Activated B cell treated with CpG ODN at 0.5 μM for 24 hours (primary cell): ENCODE measurements at regions of chr1 and their contacts with region 1.

Region 1: GRCh38 chr1:9867408-9868243 is 42.4 kb downstream of the CTNNBIP1 start:
- DNase-seq: peak; percentile 79
- ATAC-seq: peak; percentile 97
- H3K4me3 Mint-ChIP-seq: no peak overlapping the region
- H3K27ac Mint-ChIP-seq: no peak overlapping the region
- H3K4me1 Mint-ChIP-seq: no peaks in the 10 kb centered on the region
- H3K27me3 Mint-ChIP-seq: no peaks in the 10 kb centered on the region
- CTCF ChIP-seq: peak; percentile 24

Region 2: DNA sequence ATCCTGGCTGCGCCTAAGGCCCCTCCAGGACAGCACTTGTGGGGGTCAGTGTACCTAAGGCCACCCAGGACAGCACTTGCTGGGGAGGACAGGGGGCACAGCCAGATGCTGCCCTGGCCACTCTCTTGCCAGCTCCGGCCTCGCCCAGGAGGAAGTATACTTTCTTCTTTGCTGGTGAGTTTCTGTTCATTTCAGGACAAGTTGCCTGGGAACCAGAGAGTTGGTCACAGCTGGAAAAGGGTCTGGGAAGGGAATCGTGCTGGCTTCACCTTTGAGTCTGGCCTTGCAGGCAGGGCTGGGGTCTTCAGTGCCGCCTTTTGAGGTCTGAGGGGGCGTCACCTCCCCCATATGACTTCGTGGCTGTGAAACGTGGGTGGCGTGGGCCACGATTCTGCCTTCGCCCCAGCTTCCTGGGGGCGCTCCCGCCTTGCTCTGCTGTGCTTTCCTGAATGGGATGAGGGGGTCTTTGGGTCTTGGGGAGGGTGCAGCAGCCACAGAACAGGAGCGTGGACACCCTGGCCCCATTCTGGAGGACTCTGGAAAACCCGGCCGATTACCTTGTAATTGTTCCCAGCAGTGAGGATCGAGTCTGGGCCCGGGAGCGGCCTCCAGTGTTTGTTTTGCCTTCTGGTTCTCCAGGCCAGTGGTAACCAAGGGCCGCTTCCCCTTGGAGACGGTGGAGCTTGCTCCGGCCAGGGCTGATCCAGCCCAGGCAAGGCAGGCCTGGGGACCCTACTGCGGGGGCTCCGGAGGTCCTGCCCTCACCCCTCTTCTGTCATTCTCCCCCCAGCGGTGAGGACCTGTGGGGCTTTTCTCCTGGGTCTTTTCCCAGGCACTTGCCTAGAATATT is 529.0 kb before region 1 on chr1:
- CTCF ChIA-PET with region 1: no interaction called
- POLR2A ChIA-PET with region 1: no interaction called
- intact Hi-C with region 1: no loop called
- DNase-seq: no peak
- ATAC-seq: no peak
- H3K4me3 Mint-ChIP-seq: no peak overlapping the region
- H3K27ac Mint-ChIP-seq: no peak overlapping the region
- H3K4me1 Mint-ChIP-seq: no peaks in the 10 kb centered on the region
- H3K27me3 Mint-ChIP-seq: no peaks in the 10 kb centered on the region
- CTCF ChIP-seq: no peak

Region 3: GRCh38 chr1:9588551-9589143 is 279.0 kb before region 1 on chr1 and contains the start of gene TMEM201:
- CTCF ChIA-PET with region 1: no interaction called
- POLR2A ChIA-PET with region 1: no interaction called
- intact Hi-C with region 1: loop called (anchors 1 kb)
- DNase-seq: peak; percentile 98
- ATAC-seq: peak; percentile 91
- H3K4me3 Mint-ChIP-seq: peak within 1 kb of the TSS; percentile 84
- H3K27ac Mint-ChIP-seq: peak within 1 kb of the TSS; percentile 12
- H3K4me1 Mint-ChIP-seq: peaks cover 38% of the 10 kb centered on the region
- H3K27me3 Mint-ChIP-seq: no peaks in the 10 kb centered on the region
- CTCF ChIP-seq: no peak
- total RNA-seq, gene TMEM201: 8.1 and 9.4 TPM in 2 replicates

Region 4: DNA sequence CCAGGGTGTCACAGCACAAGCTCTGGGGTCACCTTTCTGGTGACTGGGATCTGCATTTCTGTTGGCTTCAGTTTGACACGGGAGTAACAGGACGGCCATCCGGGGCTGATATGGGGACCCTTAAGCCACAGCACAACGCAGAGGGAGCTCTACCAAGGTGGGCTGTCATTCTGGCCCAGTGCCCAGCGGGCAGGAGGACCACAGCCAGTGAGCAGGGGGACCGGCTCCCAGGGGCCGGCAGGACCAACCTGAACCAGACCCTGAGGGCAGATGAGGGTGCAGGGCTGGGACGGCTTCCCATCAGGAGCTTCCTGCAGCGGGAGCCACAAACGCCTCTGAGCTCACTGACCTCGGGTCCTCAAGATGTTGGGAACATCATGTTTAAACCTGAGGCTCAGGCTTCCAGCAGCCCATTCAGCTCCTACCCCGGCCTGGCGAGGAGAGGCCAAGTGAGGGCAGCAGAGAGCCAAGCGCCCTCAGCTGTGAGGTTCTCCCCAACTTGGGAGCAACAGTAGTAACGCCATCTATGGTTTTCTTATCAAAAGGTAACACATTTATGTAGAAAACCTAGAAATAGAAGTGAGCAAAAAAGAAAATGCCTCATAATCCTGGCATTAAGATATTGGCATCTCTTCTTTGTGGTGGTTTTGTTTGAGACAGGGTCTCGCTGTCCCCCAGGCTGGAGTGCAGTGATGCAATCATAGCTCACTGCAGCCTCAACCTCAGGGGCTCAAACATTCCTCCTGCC is 252.1 kb before region 1 on chr1:
- CTCF ChIA-PET with region 1: interaction called, 39 read pairs
- POLR2A ChIA-PET with region 1: no interaction called
- intact Hi-C with region 1: loop called (anchors 1 kb)
- DNase-seq: peak; percentile 47
- ATAC-seq: peak; percentile 96
- H3K4me3 Mint-ChIP-seq: no peak overlapping the region
- H3K27ac Mint-ChIP-seq: no peak overlapping the region
- H3K4me1 Mint-ChIP-seq: peaks cover 4% of the 10 kb centered on the region
- H3K27me3 Mint-ChIP-seq: no peaks in the 10 kb centered on the region
- CTCF ChIP-seq: peak; percentile 43

Region 5: DNA sequence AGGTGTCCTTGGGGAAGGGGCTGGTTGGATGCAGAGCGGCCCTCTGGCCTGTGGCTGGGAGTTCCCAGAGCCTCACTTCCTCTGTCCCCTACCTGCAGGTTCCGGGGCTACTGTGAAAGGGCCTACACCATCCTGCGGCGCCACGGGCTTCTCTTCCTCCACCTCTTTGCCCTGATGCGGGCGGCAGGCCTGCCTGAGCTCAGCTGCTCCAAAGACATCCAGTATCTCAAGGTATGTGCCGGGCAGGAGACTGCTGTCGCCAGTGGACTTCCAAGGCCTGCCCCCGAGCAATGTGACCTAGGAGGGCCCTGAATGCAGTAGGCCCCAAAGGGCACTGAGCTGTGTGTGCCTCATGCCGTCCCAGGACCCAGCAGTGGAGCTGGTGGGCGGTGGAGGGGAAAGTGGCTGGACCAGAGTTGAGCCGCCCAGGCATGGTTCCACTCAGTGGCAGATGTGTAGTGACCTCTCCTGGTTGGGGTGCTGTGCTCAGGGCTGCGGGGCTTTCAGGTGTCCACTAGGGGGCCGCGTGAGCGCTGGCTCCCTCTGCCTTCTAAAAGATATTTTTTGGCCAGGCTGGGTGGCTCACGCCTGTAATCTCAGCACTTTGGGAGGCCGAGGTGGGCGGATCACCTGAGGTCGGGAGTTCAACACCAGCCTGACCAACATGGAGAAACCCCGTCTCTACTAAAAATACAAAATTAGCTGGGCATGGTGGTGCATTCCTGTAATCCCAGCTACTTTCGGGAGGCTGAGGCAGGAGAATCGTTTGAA is 142.7 kb before region 1 on chr1:
- CTCF ChIA-PET with region 1: interaction called, 4 read pairs
- POLR2A ChIA-PET with region 1: no interaction called
- intact Hi-C with region 1: loop called (anchors 1 kb)
- DNase-seq: peak; percentile 62
- ATAC-seq: peak; percentile 70
- H3K4me3 Mint-ChIP-seq: no peak overlapping the region
- H3K27ac Mint-ChIP-seq: peak overlapping the region; percentile 74
- H3K4me1 Mint-ChIP-seq: peaks cover 21% of the 10 kb centered on the region
- H3K27me3 Mint-ChIP-seq: no peaks in the 10 kb centered on the region
- CTCF ChIP-seq: peak; percentile 62

Region 6: GRCh38 chr1:9823943-9824701 is 43.5 kb before region 1 on chr1 and contains the start of gene CLSTN1:
- CTCF ChIA-PET with region 1: interaction called, 3 read pairs
- POLR2A ChIA-PET with region 1: no interaction called
- intact Hi-C with region 1: loop called (anchors 1 kb)
- DNase-seq: peak; percentile 82
- ATAC-seq: peak; percentile 82
- H3K4me3 Mint-ChIP-seq: peak within 1 kb of the TSS; percentile 92
- H3K27ac Mint-ChIP-seq: peak within 1 kb of the TSS; percentile 82
- H3K4me1 Mint-ChIP-seq: peaks cover 55% of the 10 kb centered on the region
- H3K27me3 Mint-ChIP-seq: no peaks in the 10 kb centered on the region
- CTCF ChIP-seq: no peak
- total RNA-seq, gene CLSTN1: 50.7 and 52.2 TPM in 2 replicates

Region 7: DNA sequence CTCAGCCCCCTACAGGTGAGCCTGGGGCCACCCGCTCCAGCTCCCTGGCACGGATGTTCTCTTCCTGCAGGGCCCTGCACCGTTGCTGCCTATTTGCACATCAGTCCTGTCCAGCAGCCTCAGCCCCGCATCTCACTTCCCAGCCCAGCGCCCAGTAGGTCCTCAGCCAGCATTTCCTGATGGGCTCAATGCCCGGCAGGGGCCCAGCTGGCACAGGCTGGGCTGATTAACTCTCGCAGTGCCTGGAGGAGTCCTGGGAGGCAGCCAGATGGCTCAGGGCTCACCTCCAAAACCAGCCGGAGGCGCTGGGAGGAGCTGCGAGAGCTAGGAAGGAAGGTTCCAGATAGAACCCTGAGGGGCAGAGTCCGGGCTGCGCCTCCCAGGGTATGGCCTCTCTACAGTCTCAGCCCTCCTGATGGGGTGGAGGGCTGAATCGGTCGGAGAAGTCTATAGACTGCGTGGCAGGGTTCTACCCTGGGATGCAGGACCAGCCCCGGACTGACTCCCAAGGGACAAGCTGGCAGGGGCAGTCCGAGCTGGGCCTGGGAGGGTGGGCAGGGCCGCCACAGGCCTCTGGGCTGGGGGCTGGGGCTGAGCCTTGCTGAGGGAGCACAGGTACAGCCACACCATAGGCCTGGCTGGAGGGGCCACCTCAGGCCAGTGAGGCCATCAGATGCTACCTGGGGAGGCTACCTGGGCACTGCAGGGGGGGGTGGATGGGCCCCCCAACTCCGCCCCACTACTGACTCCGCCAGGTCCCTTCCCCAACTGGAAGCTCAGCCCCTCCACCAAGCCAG is 24.6 kb before region 1 on chr1:
- CTCF ChIA-PET with region 1: no interaction called
- POLR2A ChIA-PET with region 1: no interaction called
- intact Hi-C with region 1: no loop called
- DNase-seq: no peak
- ATAC-seq: no peak
- H3K4me3 Mint-ChIP-seq: no peak overlapping the region
- H3K27ac Mint-ChIP-seq: no peak overlapping the region
- H3K4me1 Mint-ChIP-seq: peaks cover 3% of the 10 kb centered on the region
- H3K27me3 Mint-ChIP-seq: no peaks in the 10 kb centered on the region
- CTCF ChIP-seq: no peak

Region 8: GRCh38 chr1:10217748-10218441 is 350.3 kb after region 1 on chr1:
- CTCF ChIA-PET with region 1: no interaction called
- POLR2A ChIA-PET with region 1: no interaction called
- intact Hi-C with region 1: no loop called
- DNase-seq: no peak
- ATAC-seq: no peak
- H3K4me3 Mint-ChIP-seq: no peak overlapping the region
- H3K27ac Mint-ChIP-seq: no peak overlapping the region
- H3K4me1 Mint-ChIP-seq: peaks cover 11% of the 10 kb centered on the region
- H3K27me3 Mint-ChIP-seq: no peaks in the 10 kb centered on the region
- CTCF ChIP-seq: no peak